ENCODE measurements at regions of chr10 and their contacts with region 1.

Region 1: DNA sequence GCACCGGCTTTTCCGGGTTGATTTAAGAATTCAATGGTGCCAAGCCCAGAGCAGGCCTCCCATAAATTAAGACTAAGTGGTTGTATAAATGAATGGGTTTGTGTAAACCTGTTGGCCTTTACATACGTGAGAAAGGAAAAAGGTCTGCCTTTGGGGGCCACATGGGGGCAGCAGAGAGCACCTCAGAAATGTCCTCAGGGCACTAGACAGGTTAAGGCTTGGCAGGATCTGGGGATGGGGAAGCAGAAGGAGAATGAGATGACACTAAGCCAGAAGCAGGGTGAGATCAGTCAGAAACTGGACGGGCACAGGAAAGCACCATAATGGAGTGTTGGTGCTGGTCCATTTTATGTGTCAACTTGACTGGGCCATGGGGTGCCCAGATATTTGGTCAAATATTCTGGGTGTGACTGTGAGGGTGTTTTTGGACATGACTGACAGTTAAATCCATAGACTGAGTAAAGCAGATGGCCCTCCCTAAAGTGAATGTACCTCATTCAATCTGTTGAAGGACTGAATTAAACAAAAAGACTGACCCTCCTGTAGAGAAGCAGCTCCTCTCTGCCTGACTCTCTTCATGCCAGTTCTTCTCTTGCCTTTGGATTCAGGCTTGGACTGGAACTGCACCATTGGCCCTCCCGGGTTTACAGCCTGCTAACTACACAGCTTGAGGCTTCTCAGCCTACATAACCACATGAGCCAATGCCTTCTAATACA is 58.9 kb downstream of the FRMPD2 start:
- DNase-seq: peak in 1 of 2 donors; percentile 26
- ATAC-seq: peak in 3 of 8 donors; percentile 17 to 60 (median 41)
- H3K4me3 ChIP-seq: no peak overlapping the region
- H3K27ac ChIP-seq: no peak overlapping the region
- H3K4me1 ChIP-seq: no peaks in the 10 kb centered on the region
- H3K27me3 ChIP-seq: peaks cover 0 to 9% (median 0%) of the 10 kb centered on the region in 7 donors
- CTCF ChIP-seq: peak; percentile 36 to 66 (median 58)

Region 2: DNA sequence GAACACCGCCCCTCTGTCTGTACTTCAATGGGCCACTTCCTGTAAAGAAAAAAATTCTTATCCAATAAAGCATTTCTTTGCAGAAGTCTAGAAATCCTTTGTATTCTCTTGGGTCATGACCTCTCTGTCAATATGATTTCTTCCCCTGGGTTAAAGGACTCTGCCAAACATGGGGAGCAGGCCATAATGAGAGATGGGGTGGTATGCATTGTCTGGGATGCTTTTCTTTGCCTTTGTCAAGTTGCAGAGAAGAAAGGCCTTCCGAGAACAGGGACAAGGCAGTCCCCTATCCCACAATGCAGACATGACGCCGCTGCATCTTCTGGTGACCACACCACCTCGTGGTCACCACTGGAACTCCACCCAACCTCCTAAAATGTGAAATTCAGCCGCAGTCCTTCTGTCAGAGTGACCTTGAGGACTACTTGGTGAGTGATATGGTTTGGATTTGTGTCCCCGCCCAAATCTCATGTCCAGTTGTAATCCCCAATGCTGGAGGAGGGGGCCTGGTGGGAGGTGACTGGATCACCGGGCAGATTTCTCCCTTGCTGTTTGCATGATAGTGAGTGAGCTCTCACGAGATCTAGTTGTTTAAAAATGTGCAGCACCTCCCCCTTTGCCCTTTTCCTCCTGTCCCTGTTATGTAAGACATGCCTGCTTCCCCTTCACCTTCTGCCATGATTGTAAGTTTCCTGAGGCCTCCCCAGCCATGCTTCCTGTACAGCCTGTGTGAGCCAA is 74.0 kb after region 1 on chr10:
- intact Hi-C with region 1: loop called in 7 of 10 experiments (anchors 2 to 5 kb)
- DNase-seq: peak; percentile 35 to 54
- ATAC-seq: peak; percentile 57 to 82 (median 68)
- H3K4me3 ChIP-seq: no peak overlapping the region
- H3K27ac ChIP-seq: no peak overlapping the region
- H3K4me1 ChIP-seq: peaks cover 0 to 18% (median 6%) of the 10 kb centered on the region in 9 donors
- H3K27me3 ChIP-seq: peaks cover 0 to 12% (median 2%) of the 10 kb centered on the region in 7 donors
- CTCF ChIP-seq: peak; percentile 74 to 87 (median 84)

Region 3: DNA sequence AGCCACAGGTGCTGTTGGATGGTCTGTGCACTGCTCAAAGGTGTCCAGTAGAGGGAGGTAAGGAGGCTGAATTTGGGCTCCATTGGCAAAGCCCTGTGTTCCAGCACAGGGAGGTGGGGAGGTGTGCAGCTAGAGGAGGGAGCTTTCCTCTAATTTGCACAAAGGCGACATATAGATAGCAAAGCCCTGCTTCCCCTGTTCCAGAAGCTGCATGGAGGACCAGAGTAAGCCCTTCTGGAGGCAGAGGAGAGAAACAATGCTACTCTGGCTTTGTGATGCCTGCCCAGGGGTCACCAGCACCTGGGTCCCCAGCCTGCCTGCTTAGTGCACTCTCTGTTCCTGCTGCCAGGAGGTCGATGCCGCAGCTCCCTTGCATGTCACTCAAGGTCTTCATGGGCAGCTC is 392.6 kb after region 1 on chr10:
- intact Hi-C with region 1: no loop called
- DNase-seq: no peak
- ATAC-seq: peak in 4 of 8 donors; percentile 24 to 63 (median 41)
- H3K4me3 ChIP-seq: no peak overlapping the region
- H3K27ac ChIP-seq: peak overlapping the region in 1 of 10 donors; percentile 83
- H3K4me1 ChIP-seq: peaks cover 0 to 70% (median 15%) of the 10 kb centered on the region in 9 donors
- H3K27me3 ChIP-seq: peaks cover 0 to 14% (median 9%) of the 10 kb centered on the region in 7 donors
- CTCF ChIP-seq: peak; percentile 57 to 73 (median 65)